Posterior cingulate gyrus (tissue), 11 donors: ENCODE measurements at regions of chr6 and their contacts with region 1.

Region 1: GRCh38 chr6:3414327-3415075 is 42.3 kb downstream of the SLC22A23 start:
- DNase-seq: peak in 1 of 10 donors; percentile 10

Region 2: DNA sequence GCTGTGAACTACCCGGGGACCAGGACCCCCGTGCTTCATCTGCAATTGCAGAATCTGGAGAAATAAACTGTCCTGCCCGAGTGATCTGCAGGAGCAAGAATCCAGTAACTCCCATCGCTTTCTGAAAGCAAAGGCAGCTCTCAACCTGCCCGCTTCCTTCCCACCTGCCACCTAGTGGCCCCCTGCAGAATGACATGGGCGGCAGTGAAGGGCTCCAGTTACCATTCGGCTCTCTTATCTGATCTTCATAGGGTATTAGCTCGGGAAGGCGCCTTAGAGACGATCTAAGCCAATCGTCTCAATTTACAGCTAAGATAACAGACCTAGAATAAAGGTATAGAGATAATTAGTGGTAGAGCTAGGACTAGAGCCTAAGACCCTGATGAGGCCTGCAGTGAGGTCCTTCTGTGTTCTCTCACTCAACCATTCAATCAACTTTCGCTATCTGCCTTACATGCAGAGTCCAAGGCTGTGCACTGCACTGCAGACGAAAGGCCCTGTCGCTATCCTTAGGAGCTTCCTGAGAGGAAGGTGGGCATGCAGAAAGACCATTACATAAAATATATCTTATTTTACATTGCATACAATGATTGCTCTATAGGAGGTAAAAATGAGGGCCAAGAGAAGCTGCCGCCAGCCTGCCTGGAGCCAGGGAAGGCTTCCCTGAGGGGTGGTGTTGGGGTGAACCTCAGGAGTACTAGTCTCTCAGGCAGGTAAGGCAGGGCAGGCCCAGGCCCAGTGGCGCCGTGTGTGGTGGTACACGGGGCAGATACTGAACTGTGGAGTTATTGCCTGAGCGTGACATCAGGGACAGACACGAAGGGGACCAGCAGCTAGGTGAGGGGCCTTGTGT is 162.8 kb before region 1 on chr6:
- intact Hi-C with region 1: no loop called
- DNase-seq: peak; percentile 82 to 97 (median 90)

Region 3: GRCh38 chr6:3367630-3368029 is 46.9 kb before region 1 on chr6:
- intact Hi-C with region 1: loop called (anchors 1 kb)
- DNase-seq: peak in 1 of 10 donors; percentile 9

Region 4: GRCh38 chr6:3500262-3501016 is 85.9 kb after region 1 on chr6:
- intact Hi-C with region 1: no loop called
- DNase-seq: no peak